ENCODE measurements at regions of chr6 and their contacts with region 1.

Region 1: DNA sequence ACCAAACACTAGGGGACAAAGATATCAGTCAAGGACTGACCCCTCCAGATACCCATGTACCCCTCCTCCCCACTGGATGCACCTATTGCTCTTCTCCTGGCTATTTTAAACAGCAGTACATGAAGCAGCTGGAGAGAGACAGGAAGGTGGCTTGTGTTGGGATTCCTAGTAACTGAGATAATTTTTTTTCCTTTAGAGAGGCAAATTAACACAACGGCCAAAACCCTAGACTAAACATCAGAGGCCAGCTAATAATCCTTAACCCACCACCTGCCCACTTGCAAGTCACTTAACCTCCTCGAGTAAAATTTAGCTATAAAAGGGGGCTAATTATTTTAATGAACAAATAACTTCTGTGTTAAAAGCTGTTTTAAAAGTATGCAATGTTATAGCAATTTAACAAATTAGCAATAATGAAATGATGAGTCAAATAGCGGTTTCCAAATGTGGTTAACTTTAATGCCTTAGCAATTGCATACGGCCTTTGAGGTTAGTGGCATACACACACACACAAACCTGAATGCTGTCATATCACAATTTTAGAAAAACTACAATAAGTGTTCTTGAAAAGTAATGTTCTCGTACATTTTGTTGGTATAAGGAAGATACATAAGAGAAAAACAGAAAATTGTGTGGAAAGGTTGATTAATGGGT is 151.7 kb downstream of the FRK start:
- DNase-seq: no peak
- CTCF ChIP-seq: no peak

Region 2: DNA sequence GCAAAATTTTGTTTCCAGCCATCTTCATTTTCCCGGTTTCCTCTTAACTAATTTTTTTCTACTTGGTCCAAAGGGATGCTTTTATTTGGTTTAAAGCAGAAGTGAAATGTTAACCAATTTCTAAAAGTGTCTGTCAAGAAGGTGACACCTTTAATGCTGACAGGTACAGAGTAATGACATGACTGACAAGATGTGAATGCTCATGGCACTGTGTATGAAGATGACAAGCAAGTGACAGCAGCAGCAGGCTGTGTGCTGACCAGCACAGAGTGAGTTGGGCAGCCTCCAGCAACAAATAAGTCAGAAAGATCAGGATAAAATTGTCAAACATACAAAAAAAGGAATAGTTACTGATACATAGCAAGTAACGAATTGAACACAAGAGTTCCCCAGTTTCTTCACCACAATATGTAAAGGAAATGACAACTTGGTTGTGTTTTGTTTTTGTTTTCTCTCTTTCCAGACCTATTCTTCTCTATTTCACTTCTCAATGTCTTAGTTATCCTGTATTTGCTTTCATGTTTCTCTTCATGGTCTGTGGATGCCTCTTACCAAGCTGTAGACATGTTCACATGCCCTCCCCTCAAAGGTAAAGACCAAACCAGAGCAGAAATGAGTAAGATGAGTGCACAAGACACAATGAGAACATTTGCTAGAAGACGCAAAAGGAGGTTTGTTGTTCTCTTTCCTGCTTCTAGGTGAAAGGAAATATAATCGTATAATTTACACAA is 23.2 kb before region 1 on chr6:
- CTCF ChIA-PET with region 1: no interaction called
- POLR2A ChIA-PET with region 1: no interaction called
- DNase-seq: peak; percentile 13
- CTCF ChIP-seq: no peak

Region 3: GRCh38 chr6:115896538-115897129 is 12.4 kb before region 1 on chr6:
- CTCF ChIA-PET with region 1: interaction called, 15 read pairs
- POLR2A ChIA-PET with region 1: no interaction called
- DNase-seq: peak; percentile 18
- CTCF ChIP-seq: peak; percentile 77